ENCODE measurements at regions of chr1 and their contacts with region 1.

Region 1: GRCh38 chr1:201559679-201560162 is 20.8 kb downstream of the NAV1 start:
- DNase-seq: peak; percentile 79
- H3K4me3 Mint-ChIP-seq: no peak overlapping the region
- H3K27ac Mint-ChIP-seq: no peak overlapping the region
- H3K4me1 Mint-ChIP-seq: peaks cover 5% of the 10 kb centered on the region
- H3K27me3 Mint-ChIP-seq: no peaks in the 10 kb centered on the region

Region 2: DNA sequence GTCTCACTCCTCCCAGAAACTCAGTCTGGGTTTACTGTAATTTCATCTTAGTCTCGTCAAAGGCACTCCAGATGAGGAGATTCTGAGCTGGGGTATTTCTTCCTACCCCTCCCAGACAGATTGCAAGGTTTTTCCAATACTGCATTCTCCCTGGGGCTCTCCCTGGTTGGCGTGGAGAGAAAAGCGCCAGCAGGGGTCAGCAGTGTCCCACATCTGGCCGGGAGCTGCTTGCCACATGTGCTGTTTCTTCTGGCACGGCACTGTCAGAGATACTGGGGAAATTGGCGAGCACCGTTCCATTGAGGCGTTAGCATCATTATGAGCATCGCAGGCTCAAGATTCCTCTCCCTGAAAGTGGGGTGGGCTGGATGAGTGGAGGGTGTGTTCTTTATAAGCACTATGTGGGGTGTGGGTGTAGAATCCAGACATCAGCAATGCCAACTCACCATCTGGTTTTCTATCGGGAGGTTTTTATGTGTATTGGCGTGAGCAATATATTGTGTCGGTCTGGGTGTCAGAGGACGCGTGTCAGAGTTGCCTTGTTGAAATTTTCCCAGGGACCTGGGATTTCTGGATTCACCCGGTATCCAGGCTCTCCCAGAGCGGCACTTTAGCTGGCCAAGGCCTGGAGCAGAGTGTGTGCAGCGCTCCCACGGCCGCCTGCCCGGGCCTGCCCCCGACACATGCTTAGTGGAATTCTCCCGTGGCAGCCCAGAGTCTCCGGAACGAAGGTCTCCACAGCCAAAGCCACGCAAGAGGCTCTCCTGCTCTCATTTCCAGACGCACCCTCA is 28.8 kb before region 1 on chr1:
- CTCF ChIA-PET with region 1: interaction called, 18 read pairs
- POLR2A ChIA-PET with region 1: no interaction called
- intact Hi-C with region 1: no loop called
- DNase-seq: peak; percentile 65
- H3K4me3 Mint-ChIP-seq: no peak overlapping the region
- H3K27ac Mint-ChIP-seq: no peak overlapping the region
- H3K4me1 Mint-ChIP-seq: peaks cover 4% of the 10 kb centered on the region
- H3K27me3 Mint-ChIP-seq: peaks cover 3% of the 10 kb centered on the region

Region 3: DNA sequence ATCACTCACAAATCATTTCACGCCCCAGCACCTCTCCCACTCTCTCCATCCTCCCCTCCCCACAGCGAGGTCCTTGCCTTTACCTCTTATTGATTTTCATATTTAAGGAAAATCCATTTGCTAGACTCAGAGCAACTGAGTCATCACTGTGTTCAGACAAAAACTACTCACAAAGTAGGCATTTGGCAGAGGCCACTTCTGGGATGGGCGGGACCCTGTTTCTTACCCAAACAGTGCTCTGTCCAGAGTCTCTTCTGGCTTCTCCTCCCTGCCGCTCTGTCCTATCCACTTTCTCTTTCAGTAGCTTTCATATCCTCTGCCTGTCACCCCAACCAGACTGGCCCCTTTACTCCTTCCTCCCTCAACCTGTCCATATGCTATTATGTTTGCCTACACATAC is 23.2 kb before region 1 on chr1:
- CTCF ChIA-PET with region 1: interaction called, 18 read pairs
- POLR2A ChIA-PET with region 1: no interaction called
- intact Hi-C with region 1: no loop called
- DNase-seq: no peak
- H3K4me3 Mint-ChIP-seq: no peak overlapping the region
- H3K27ac Mint-ChIP-seq: no peak overlapping the region
- H3K4me1 Mint-ChIP-seq: peaks cover 16% of the 10 kb centered on the region
- H3K27me3 Mint-ChIP-seq: peaks cover 47% of the 10 kb centered on the region

Region 4: DNA sequence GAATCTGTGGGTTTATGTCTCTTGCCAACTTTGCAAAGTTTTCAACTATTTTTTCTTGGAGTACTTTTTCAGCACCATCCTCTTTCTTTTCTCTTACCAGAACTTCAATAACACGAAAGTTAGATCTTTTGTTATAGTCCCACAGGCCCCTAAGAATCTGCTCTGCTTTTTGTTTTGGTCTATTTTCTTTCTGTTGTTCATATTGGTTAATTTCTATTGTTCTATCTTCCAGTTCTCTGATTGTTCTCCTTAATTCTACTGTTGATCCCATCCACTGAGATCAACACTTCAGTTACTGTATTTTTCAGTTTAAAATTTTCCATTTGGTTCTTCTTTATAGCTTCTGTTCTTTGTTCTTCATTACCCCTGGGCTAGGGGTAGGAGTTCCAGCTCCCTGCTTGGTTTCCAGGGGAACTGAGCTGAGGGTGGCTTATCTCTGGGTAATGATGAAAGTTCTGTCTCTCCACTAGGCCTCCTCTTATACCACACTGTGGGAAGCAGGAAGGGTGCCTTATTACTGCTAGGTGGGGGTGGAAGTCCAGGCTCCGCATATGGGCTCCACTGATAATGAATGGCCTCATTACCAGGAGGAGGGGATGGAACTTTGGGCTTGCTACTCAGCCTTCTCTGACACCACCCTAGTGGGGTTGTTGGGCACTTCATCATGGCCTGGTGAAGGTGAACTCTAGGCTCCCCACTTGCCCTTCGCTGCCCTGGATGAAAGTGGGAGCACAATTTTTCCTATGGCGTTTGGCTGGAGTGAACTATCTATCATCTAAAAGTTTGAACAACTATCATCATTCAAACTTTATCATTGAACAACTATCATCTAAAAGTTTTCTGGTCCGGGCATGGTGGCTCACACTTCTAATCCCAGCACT is 18.5 kb after region 1 on chr1:
- CTCF ChIA-PET with region 1: interaction called, 12 read pairs
- POLR2A ChIA-PET with region 1: no interaction called
- intact Hi-C with region 1: no loop called
- DNase-seq: no peak
- H3K4me3 Mint-ChIP-seq: no peak overlapping the region
- H3K27ac Mint-ChIP-seq: no peak overlapping the region
- H3K4me1 Mint-ChIP-seq: peaks cover 3% of the 10 kb centered on the region
- H3K27me3 Mint-ChIP-seq: peaks cover 4% of the 10 kb centered on the region

Region 5: GRCh38 chr1:201703621-201704439 is 144.1 kb after region 1 on chr1:
- CTCF ChIA-PET with region 1: interaction called, 125 read pairs
- POLR2A ChIA-PET with region 1: no interaction called
- intact Hi-C with region 1: loop called (anchors 1 kb)
- DNase-seq: peak; percentile 78
- H3K4me3 Mint-ChIP-seq: no peak overlapping the region
- H3K27ac Mint-ChIP-seq: no peak overlapping the region
- H3K4me1 Mint-ChIP-seq: no peaks in the 10 kb centered on the region
- H3K27me3 Mint-ChIP-seq: no peaks in the 10 kb centered on the region

Region 6: DNA sequence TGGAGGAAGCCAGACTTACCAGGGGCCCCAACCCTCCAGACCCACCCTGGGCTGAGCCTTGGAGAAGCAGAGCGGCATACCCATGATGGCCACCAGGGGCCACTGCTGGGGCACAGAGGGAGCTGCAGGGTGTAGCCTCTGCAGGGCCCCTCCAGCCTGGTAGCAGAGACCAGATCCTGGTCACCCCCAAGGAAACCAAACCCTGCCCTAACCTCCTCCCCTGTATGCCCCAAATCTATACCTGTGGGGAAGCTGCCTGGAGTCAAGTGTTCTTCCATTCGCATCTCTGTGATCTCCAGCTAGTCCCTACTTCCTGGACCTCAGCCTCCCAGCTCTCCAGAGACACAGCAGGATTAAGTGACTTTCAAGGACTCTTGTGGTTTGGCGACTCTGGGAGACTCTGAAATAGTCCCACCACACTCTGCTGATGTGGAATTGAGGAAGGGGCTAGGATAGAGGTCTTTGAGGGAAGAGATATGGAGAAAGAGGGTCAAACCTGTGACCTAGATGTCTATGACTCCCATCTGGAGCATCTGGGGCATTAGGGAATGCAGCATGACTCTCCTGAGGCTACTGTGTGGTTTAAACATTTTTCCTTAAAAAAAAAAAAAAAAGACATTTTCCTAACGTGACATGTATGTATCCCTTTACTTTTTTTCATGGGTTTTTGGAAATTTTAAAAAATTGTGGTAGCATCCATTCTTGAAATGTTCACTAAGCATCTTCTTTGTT is 150.0 kb after region 1 on chr1:
- CTCF ChIA-PET with region 1: interaction called, 125 read pairs
- POLR2A ChIA-PET with region 1: no interaction called
- intact Hi-C with region 1: loop called (anchors 1 kb)
- DNase-seq: peak; percentile 69
- H3K4me3 Mint-ChIP-seq: no peak overlapping the region
- H3K27ac Mint-ChIP-seq: no peak overlapping the region
- H3K4me1 Mint-ChIP-seq: no peaks in the 10 kb centered on the region
- H3K27me3 Mint-ChIP-seq: no peaks in the 10 kb centered on the region

Region 7: DNA sequence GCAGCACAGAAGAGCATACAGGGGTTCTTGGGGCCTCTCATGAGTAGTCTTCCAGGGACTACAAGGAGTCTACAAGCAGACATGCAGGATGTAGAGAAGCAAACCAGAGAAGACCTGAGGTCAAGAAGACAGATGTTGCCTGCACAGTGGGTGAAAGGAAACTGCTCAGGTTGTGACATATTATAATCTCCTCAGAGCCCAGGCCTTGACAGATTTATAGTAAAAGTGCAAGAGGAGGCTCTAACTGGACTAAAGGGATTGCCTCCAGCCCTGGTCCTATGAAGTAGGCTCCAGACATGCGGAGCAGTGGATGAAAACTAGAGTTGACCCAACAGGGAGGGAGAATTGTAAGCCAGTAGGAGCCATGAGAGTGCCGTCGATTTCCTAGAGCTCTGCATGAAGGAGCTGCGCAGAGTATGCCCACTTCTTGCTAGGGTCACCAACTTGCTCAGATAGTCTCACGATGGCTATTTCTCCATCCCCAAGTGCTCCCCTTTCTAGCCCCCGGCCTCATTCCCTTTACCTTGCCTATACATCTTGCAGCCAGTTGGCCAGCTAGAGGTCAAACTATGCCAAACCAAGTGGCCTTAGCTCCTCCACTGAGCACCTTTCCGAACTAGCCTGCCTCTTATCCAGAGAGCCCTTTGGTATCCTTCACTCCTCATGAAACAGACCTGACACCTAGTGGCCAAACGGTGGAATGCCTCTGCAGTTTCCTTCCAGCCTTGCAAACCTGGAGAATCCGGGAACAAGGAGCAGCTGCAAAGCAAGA is 233.0 kb after region 1 on chr1:
- CTCF ChIA-PET with region 1: interaction called, 34 read pairs
- POLR2A ChIA-PET with region 1: no interaction called
- intact Hi-C with region 1: loop called (anchors 1 kb)
- DNase-seq: peak; percentile 59
- H3K4me3 Mint-ChIP-seq: no peak overlapping the region
- H3K27ac Mint-ChIP-seq: no peak overlapping the region
- H3K4me1 Mint-ChIP-seq: no peaks in the 10 kb centered on the region
- H3K27me3 Mint-ChIP-seq: no peaks in the 10 kb centered on the region

Measured in activated CD4-positive, alpha-beta memory T cell treated with anti-CD3 and anti-CD28 coated beads for 36 hours (primary cell).